IMR-90 (cell line): ENCODE measurements at regions of chr18 and their contacts with region 1.

Region 1: DNA sequence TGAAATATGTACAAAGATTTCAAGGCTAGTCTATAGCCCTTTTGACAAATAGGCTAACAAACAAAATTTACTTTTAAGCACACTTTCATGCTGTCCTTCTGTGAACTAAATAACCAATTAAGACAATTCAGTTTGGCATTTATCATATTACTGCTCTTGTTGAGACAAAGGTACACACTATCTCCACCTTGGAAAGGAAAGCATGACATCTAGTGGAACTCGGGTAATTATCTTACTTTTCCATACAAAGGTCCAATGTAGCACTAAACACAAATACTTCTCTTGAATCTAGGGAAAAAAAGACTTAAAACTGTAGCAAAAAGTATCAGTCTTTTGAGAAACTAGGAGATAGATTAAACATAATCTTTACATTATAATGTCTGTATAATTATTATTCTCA is 125.0 kb upstream of the CD226 start:
- DNase-seq: peak; percentile 50
- ATAC-seq: peak; percentile 39; the same call in 1 of the 2 replicates
- H3K4me3 ChIP-seq: no peak overlapping the region
- H3K27ac ChIP-seq: no peak overlapping the region
- H3K4me1 ChIP-seq: peaks cover 2% of the 10 kb centered on the region; the same call in 1 of the 2 replicates
- H3K27me3 ChIP-seq: no peaks in the 10 kb centered on the region
- CTCF ChIP-seq: peak; percentile 59
- POLR2A ChIP-seq: no peak
- RAD21 ChIP-seq: peak; percentile 74

Region 2: GRCh38 chr18:69400253-69400975 is 672.3 kb before region 1 on chr18 and contains the start of gene DOK6:
- CTCF ChIA-PET with region 1: no interaction called
- POLR2A ChIA-PET with region 1: no interaction called
- dilution Hi-C with region 1: no loop called
- in situ Hi-C with region 1: no loop called
- intact Hi-C with region 1: loop called (anchors 5 kb)
- DNase-seq: peak; percentile 69
- ATAC-seq: peak; percentile 84
- H3K4me3 ChIP-seq: peak within 1 kb of the TSS; percentile 42
- H3K27ac ChIP-seq: peak within 1 kb of the TSS; percentile 51; the same call in 1 of the 2 replicates
- H3K4me1 ChIP-seq: no peaks in the 10 kb centered on the region
- H3K27me3 ChIP-seq: peaks cover 10% of the 10 kb centered on the region
- CTCF ChIP-seq: no peak
- POLR2A ChIP-seq: no peak
- RAD21 ChIP-seq: no peak
- total RNA-seq, gene DOK6: 2.7 and 3.9 TPM in 2 replicates

Region 3: GRCh38 chr18:69538849-69539248 is 533.8 kb before region 1 on chr18:
- CTCF ChIA-PET with region 1: no interaction called
- POLR2A ChIA-PET with region 1: no interaction called
- dilution Hi-C with region 1: no loop called
- in situ Hi-C with region 1: no loop called
- intact Hi-C with region 1: no loop called
- DNase-seq: no peak
- ATAC-seq: no peak; the same call in 1 of the 2 replicates
- H3K4me3 ChIP-seq: no peak overlapping the region
- H3K27ac ChIP-seq: no peak overlapping the region
- H3K4me1 ChIP-seq: no peaks in the 10 kb centered on the region
- H3K27me3 ChIP-seq: no peaks in the 10 kb centered on the region
- CTCF ChIP-seq: no peak
- POLR2A ChIP-seq: no peak
- RAD21 ChIP-seq: no peak

Region 4: GRCh38 chr18:69691008-69691760 is 381.5 kb before region 1 on chr18:
- CTCF ChIA-PET with region 1: no interaction called
- POLR2A ChIA-PET with region 1: no interaction called
- dilution Hi-C with region 1: no loop called
- in situ Hi-C with region 1: no loop called
- intact Hi-C with region 1: loop called (anchors 10 kb)
- DNase-seq: no peak
- ATAC-seq: no peak
- H3K4me3 ChIP-seq: no peak overlapping the region
- H3K27ac ChIP-seq: no peak overlapping the region
- H3K4me1 ChIP-seq: peaks cover 4% of the 10 kb centered on the region; the same call in 1 of the 2 replicates
- H3K27me3 ChIP-seq: no peaks in the 10 kb centered on the region
- CTCF ChIP-seq: no peak
- POLR2A ChIP-seq: no peak
- RAD21 ChIP-seq: no peak

Region 5: DNA sequence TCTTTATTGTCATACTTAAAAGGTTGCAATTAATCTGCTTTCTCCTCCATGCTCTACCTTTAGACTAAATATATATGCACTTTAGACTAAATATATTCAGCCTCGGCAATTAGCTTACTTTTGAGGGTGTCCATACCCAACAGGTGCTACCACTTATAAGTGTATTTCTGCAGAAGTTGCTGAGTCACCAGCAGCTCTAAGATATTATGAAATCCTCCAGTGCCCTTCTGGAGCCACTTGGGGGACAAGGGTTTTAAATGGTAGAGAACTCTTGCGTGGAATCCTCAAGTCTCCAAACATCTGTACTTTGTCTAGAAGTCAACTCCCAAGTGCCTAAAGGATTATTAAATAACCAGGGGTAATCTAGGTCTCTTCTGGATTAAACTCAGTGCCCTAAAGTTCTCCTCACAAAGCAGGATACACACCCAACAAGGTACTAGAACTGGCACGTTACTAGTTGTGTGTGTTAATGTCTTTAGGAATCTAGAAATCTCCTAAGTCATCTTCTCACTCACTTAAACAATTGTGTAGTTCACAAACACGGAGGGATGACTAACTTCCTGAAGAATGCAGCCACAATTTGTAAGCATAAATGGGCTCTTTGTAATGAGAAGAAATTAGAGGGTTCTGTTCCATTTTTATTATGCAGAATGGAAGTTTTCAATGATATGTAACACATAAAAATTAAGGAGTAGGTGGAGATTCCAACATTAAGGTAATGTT is 284.7 kb before region 1 on chr18:
- CTCF ChIA-PET with region 1: no interaction called
- POLR2A ChIA-PET with region 1: no interaction called
- dilution Hi-C with region 1: no loop called
- in situ Hi-C with region 1: no loop called
- intact Hi-C with region 1: loop called (anchors 10 kb)
- DNase-seq: peak; percentile 83
- ATAC-seq: peak; percentile 93
- H3K4me3 ChIP-seq: no peak overlapping the region
- H3K27ac ChIP-seq: peak overlapping the region; percentile 56; the same call in 1 of the 2 replicates
- H3K4me1 ChIP-seq: peaks cover 7% of the 10 kb centered on the region; the same call in 1 of the 2 replicates
- H3K27me3 ChIP-seq: no peaks in the 10 kb centered on the region
- CTCF ChIP-seq: no peak
- POLR2A ChIP-seq: no peak
- RAD21 ChIP-seq: no peak

Region 6: GRCh38 chr18:70036771-70037347 is 35.8 kb before region 1 on chr18:
- CTCF ChIA-PET with region 1: no interaction called
- POLR2A ChIA-PET with region 1: no interaction called
- dilution Hi-C with region 1: no loop called
- in situ Hi-C with region 1: no loop called
- intact Hi-C with region 1: no loop called
- DNase-seq: no peak
- ATAC-seq: no peak
- H3K4me3 ChIP-seq: no peak overlapping the region
- H3K27ac ChIP-seq: no peak overlapping the region
- H3K4me1 ChIP-seq: no peaks in the 10 kb centered on the region
- H3K27me3 ChIP-seq: no peaks in the 10 kb centered on the region
- CTCF ChIP-seq: no peak
- POLR2A ChIP-seq: no peak
- RAD21 ChIP-seq: no peak